ENCODE measurements at regions of chr17 and their contacts with region 1.

Region 1: DNA sequence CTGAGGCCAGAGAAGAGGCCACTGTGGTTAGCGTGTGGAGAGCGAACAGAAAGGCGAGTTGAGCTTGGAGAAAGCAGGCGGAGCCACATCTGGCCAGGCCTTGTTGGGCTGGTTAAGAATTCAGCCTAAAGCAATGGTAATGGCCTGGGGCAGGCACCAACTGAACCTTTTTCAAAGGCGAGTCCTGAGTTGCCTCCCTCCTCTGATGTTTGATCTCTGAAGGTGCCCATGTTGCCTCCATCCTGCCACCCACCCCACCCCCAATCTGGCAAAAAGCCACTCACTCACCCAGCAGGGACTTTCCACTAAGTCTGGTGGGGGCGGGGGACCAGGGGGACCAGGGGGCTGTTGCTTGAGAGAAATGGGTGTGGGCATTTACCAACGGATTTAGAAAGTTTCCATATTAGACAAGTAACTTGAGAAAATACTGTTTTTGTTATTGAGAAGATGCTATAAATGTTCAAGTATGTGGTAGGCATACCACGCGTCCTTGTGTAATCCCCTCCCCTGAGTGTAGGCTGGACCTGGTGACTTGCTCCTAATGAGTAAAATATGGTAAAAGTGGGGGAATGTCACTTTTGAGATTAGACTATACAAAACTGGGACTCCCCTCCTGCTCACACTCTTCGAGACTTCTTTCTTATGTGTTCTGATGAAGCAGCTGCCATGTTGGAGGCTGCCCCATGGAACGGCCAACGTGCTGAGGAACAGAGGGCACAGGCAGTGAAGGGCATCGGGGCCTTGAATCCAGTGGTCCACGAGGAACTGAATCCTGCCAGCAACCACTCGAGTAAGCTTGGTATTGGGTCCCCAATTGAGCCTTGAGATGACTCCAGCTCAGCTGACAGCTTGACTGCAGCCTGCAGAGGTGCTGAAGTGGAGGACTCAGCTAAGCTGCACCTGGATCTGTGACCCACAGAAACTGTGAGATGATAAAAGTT is 29.9 kb upstream of the TNS4 start:
- DNase-seq: peak; percentile 42

Region 2: DNA sequence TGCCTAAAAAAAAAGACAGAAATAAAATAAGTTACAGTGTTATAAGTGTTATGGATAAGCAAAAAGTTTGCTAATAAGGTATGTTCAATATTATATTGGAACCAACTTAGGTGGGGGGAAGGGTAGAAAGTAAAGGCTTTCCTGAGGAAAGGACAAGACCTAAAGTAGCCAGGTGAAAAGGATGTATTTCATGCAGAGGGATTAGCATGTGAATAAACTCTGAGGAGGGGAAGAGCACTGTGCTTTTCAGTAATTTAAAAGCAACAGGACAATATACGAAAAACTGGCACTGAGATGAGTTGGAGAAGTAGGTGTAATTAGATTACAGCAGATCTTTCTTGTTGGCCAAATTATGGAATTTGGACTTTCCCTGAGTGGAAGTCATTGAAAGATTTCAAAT is 121.2 kb before region 1 on chr17:
- intact Hi-C with region 1: no loop called
- DNase-seq: no peak

Region 3: GRCh38 chr17:40480501-40481003 is 50.8 kb before region 1 on chr17:
- intact Hi-C with region 1: loop called in 1 of 2 experiments (anchors 5 kb)
- DNase-seq: no peak

Region 4: DNA sequence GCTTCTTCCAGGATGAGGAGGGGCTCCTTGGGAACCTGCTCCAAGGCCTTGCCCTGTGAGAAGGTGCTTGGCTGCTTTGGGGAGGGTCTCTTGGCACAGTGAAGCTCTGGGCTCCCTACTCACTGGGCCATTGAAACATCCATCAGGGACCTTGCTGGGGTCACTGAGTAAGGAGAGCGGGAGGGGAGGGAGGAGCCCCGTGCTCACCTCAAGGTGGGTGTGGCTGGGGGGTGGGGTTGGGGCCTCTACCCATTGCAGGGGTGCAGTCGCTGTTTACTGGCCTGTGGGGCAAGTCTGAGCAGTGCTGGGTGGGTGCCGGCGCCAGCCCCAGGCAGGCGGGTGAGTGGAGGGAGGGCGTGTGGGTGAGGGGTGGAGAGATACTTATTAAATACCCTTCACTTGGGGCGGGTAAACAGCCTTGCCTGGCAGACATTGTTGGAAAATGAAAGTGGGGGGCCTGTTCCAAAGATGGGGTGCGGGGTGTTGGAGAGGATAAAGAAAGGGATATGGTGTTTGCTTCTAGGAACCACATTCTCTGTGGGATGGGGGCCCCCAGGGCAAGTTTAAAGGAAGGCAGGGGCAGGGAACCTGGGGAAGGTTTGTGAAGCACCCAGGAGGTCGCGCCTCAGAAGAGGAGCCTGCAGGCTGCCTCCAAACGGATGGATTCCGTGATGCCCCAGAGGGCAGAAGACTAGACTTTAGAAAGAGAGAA is 39.7 kb before region 1 on chr17:
- intact Hi-C with region 1: no loop called
- DNase-seq: no peak

Region 5: GRCh38 chr17:40559954-40560591 is 28.8 kb after region 1 on chr17:
- intact Hi-C with region 1: no loop called
- DNase-seq: peak; percentile 96

Region 6: GRCh38 chr17:40576225-40576651 is 44.9 kb after region 1 on chr17:
- intact Hi-C with region 1: loop called in 1 of 2 experiments (anchors 1 kb)
- DNase-seq: no peak

Region 7: GRCh38 chr17:41518789-41519449 is 987.6 kb after region 1 on chr17 and contains the start of gene KRT15:
- intact Hi-C with region 1: no loop called
- DNase-seq: no peak
- total RNA-seq, gene KRT15: not detected

Measured in posterior vena cava (tissue), 2 donors.